SK-N-SH (cell line): ENCODE measurements at regions of chr16 and their contacts with region 1.

Region 1: DNA sequence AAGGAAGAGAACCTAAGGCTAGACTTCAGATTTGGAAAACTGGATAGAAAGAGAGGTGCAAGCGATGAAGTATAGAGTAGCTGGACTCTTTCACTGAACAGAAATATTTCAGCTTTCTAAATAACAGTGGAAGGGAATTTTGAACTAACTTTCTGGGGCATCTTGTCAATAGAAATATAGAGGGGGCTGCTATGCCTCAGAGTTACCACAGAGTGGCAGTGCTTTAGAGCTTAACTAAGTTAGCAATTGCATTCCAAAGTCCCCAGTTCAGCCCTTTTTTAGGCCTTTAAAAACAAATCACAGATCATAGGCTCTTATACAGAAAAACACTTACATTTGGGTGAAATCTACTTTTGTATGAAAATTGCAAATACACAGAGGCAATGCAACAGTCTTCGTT is 154.2 kb upstream of the CDH8 start:
- DNase-seq: peak; percentile 31
- H3K4me3 ChIP-seq: no peak overlapping the region
- H3K27ac ChIP-seq: no peak overlapping the region
- H3K4me1 ChIP-seq: peaks cover 0 to 3% of the 10 kb centered on the region in 2 experiments; a peak in 2 of 4 replicates
- H3K27me3 ChIP-seq: no peaks in the 10 kb centered on the region
- CTCF ChIP-seq: peak; percentile 66
- EP300 ChIP-seq: no peak
- RAD21 ChIP-seq: peak; percentile 80

Region 2: GRCh38 chr16:62014319-62014933 is 176.0 kb before region 1 on chr16:
- CTCF ChIA-PET with region 1: no interaction called
- POLR2A ChIA-PET with region 1: no interaction called
- DNase-seq: no peak
- H3K4me3 ChIP-seq: no peak overlapping the region
- H3K27ac ChIP-seq: no peak overlapping the region
- H3K4me1 ChIP-seq: no peaks in the 10 kb centered on the region
- H3K27me3 ChIP-seq: no peaks in the 10 kb centered on the region
- CTCF ChIP-seq: no peak
- EP300 ChIP-seq: no peak
- RAD21 ChIP-seq: no peak

Region 3: GRCh38 chr16:62036101-62036801 is 154.2 kb before region 1 on chr16 and contains the start of gene CDH8:
- CTCF ChIA-PET with region 1: no interaction called
- POLR2A ChIA-PET with region 1: no interaction called
- DNase-seq: peak; percentile 22
- H3K4me3 ChIP-seq: peak within 1 kb of the TSS in 1 of 2 experiments; percentile 31; a peak in 3 of 4 replicates
- H3K27ac ChIP-seq: no peak within 1 kb of the TSS
- H3K4me1 ChIP-seq: peaks cover 0 to 3% of the 10 kb centered on the region in 2 experiments; a peak in 1 of 4 replicates
- H3K27me3 ChIP-seq: peaks cover 40% of the 10 kb centered on the region
- CTCF ChIP-seq: no peak
- EP300 ChIP-seq: no peak
- RAD21 ChIP-seq: no peak
- polyA plus RNA-seq, gene CDH8: 0.05 TPM in 1 of 2 replicates, not detected in the other

Region 4: DNA sequence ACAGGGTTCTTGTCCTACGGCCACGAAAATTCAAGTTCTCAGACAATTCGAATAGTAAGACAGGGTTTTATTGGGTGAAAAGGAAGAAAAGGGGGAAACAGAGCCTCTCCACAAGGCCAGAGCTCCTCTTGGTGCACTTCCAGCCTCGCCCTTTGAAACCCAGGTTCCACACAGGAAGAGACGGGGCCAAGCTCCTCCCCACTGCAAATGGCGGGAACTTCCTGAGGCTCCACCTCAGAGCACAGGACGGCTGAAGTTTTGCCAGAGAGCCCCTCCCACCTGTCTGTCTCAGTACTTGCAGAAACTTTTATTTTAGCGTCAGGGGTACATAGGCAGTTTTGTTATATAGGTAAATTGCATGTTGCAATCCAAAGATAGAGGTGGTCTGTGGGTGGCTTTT is 11.5 kb after region 1 on chr16:
- CTCF ChIA-PET with region 1: interaction called, 11 read pairs
- POLR2A ChIA-PET with region 1: no interaction called
- DNase-seq: no peak
- H3K4me3 ChIP-seq: no peak overlapping the region
- H3K27ac ChIP-seq: no peak overlapping the region
- H3K4me1 ChIP-seq: no peaks in the 10 kb centered on the region
- H3K27me3 ChIP-seq: no peaks in the 10 kb centered on the region
- CTCF ChIP-seq: no peak
- EP300 ChIP-seq: no peak
- RAD21 ChIP-seq: no peak

Region 5: GRCh38 chr16:62256406-62256805 is 66.0 kb after region 1 on chr16:
- CTCF ChIA-PET with region 1: interaction called, 11 read pairs
- POLR2A ChIA-PET with region 1: no interaction called
- DNase-seq: peak; percentile 7
- H3K4me3 ChIP-seq: no peak overlapping the region
- H3K27ac ChIP-seq: no peak overlapping the region
- H3K4me1 ChIP-seq: peaks cover 9 to 10% of the 10 kb centered on the region in 2 experiments; a peak in 3 of 4 replicates
- H3K27me3 ChIP-seq: no peaks in the 10 kb centered on the region
- CTCF ChIP-seq: peak; percentile 60
- EP300 ChIP-seq: no peak
- RAD21 ChIP-seq: peak; percentile 58; the same call in 1 of the 2 replicates

Region 6: GRCh38 chr16:62272035-62272434 is 81.6 kb after region 1 on chr16:
- CTCF ChIA-PET with region 1: no interaction called
- POLR2A ChIA-PET with region 1: no interaction called
- DNase-seq: no peak
- H3K4me3 ChIP-seq: no peak overlapping the region
- H3K27ac ChIP-seq: no peak overlapping the region
- H3K4me1 ChIP-seq: no peaks in the 10 kb centered on the region
- H3K27me3 ChIP-seq: no peaks in the 10 kb centered on the region
- CTCF ChIP-seq: no peak
- EP300 ChIP-seq: no peak
- RAD21 ChIP-seq: no peak

Region 7: DNA sequence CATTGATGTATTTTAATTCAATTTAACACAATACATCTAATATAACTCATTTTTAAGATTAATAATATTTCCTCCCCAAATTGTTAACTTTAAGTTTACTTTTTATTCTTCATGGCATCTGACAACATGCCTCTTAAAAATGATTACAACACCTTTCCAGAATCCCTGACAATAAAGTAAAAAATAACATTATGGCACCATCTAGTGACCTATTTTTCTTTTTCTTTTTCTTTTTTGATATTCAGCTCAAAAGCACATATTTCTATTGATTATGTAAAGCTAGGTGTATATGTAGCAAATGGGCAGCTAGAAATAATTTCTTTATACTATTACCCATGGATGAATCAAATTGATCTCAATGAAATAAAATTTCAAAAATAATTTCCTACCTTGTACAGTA is 680.1 kb after region 1 on chr16:
- CTCF ChIA-PET with region 1: interaction called, 21 read pairs
- POLR2A ChIA-PET with region 1: no interaction called
- DNase-seq: no peak
- H3K4me3 ChIP-seq: no peak overlapping the region
- H3K27ac ChIP-seq: no peak overlapping the region
- H3K4me1 ChIP-seq: no peaks in the 10 kb centered on the region; a peak in 1 of 4 replicates
- H3K27me3 ChIP-seq: no peaks in the 10 kb centered on the region
- CTCF ChIP-seq: no peak
- EP300 ChIP-seq: no peak
- RAD21 ChIP-seq: peak; percentile 65

Region 8: DNA sequence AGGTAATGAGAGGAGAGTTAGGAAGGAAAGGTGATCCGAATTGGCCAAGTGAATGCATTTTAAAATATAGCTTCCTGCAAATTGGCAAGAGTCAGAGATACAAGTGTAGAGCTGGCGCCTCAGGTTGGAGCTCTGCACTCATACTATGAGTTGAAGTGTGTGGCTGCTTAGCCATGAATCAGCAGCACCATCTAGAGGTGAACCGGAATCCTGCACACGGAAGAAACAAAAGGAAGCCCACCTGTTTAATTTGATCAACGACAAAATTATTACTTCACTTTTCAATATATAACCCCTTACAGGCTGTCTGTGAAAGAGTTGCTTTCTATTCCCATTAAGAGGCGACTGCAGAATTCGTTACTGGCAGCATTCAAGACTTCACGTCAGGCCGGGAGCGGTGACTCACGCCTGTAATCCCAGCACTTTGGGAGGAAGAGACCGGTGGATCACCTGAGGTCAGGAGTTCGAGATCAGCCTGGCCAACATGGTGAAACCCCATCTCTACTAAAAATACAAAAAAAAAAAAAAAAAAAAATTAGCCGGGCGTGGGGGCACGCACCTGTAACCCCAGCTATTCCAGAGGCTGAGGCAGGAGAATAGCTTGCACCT is 1099.5 kb after region 1 on chr16:
- CTCF ChIA-PET with region 1: interaction called, 17 read pairs
- POLR2A ChIA-PET with region 1: no interaction called
- DNase-seq: peak; percentile 48
- H3K4me3 ChIP-seq: peak overlapping the region in 1 of 2 experiments; percentile 31; a peak in 1 of 4 replicates
- H3K27ac ChIP-seq: no peak overlapping the region
- H3K4me1 ChIP-seq: no peaks in the 10 kb centered on the region
- H3K27me3 ChIP-seq: no peaks in the 10 kb centered on the region
- CTCF ChIP-seq: peak; percentile 94
- EP300 ChIP-seq: no peak
- RAD21 ChIP-seq: peak; percentile 96